ENCODE measurements at regions of chr2 and their contacts with region 1.

Region 1: GRCh38 chr2:241702132-241703031 is 543 bp downstream of the ING5 start:
- DNase-seq: peak; percentile 95
- ATAC-seq: peak; percentile 81
- H3K4me3 Mint-ChIP-seq: peak overlapping the region; percentile 76
- H3K27ac Mint-ChIP-seq: peak overlapping the region; percentile 75
- H3K4me1 Mint-ChIP-seq: peaks cover 35% of the 10 kb centered on the region
- H3K27me3 Mint-ChIP-seq: no peaks in the 10 kb centered on the region
- CTCF ChIP-seq: peak; percentile 80

Region 2: GRCh38 chr2:241686649-241687425 is 15.5 kb before region 1 on chr2 and contains the start of gene DTYMK:
- CTCF ChIA-PET with region 1: interaction called, 8 read pairs
- POLR2A ChIA-PET with region 1: interaction called, 77 read pairs
- intact Hi-C with region 1: no loop called
- DNase-seq: peak; percentile 97
- ATAC-seq: peak; percentile 97
- H3K4me3 Mint-ChIP-seq: peak within 1 kb of the TSS; percentile 97
- H3K27ac Mint-ChIP-seq: peak within 1 kb of the TSS; percentile 97
- H3K4me1 Mint-ChIP-seq: peaks cover 28% of the 10 kb centered on the region
- H3K27me3 Mint-ChIP-seq: no peaks in the 10 kb centered on the region
- CTCF ChIP-seq: no peak
- total RNA-seq, gene DTYMK: 87.1 to 91.9 TPM

Region 3: DNA sequence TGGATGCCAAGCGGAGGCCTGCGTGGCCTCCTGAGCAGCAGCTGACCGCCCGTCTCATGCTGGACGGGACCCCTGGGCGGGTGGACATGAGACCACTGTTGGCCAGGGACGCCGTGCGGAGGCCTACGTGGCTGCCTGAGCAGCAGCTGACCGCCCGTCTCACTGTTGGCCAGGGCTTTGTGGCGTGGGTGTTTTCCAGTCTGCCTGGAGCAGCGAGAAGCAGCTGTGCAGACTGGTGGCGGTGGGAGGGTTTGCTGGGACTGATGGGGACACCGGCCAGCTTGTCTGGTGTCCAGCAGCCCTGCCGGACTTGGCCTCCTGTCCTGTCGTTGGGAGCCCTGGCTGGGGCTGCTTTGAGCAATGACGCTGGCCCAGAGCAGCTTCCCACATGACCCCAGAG is 26.2 kb after region 1 on chr2:
- CTCF ChIA-PET with region 1: interaction called, 16 read pairs
- POLR2A ChIA-PET with region 1: interaction called, 15 read pairs
- intact Hi-C with region 1: no loop called
- DNase-seq: no peak
- ATAC-seq: no peak
- H3K4me3 Mint-ChIP-seq: no peak overlapping the region
- H3K27ac Mint-ChIP-seq: no peak overlapping the region
- H3K4me1 Mint-ChIP-seq: peaks cover 27% of the 10 kb centered on the region
- H3K27me3 Mint-ChIP-seq: no peaks in the 10 kb centered on the region
- CTCF ChIP-seq: no peak

Region 4: DNA sequence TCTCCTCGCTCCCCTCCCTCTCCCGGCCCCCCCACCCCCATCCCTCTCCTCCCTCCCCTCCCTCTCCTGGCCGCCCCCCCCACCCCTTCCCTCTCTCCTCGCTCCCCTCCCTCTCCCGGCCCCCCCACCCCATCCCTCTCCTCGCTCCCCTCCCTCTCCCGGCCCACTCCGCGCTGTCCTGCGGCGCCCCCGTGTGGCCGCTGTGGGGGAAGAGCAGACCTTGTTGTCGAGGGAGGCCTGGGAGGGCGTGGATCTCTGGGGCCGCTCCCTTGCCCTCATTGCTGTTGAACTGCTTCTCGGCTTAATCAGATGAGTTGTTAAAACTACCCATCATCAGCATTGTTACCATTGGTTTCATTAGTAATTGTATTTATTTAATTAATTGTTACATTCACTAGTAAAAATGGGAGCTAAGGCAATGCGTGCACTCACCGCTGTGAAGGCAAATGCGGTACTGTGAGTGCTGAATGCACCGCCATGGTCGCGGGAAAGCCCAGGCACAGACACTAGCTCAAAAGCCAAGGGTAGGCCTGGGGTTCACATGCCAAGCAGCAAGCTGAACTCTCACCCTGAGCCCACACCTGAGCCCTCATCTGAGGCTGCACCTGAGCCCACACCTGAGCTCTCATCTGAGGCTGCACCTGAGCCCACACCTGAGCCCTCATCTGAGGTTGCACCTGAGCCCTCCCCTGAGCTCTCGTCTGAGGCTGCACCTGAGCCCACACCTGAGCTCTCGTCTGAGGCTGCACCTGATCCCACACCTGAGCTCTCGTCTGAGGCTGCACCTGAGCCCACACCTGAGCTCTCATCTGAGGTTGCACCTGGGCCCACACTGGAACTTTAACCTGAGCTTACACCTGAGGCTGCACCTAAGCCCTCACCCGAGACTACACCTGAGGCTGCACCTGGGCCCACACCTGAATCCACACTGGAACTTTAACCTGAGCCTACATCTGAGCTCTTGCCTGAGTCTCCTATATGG is 175.9 kb after region 1 on chr2:
- CTCF ChIA-PET with region 1: interaction called, 19 read pairs
- POLR2A ChIA-PET with region 1: interaction called, 9 read pairs
- intact Hi-C with region 1: no loop called
- DNase-seq: peak; percentile 84
- ATAC-seq: no peak
- H3K4me3 Mint-ChIP-seq: no peak overlapping the region
- H3K27ac Mint-ChIP-seq: no peak overlapping the region
- H3K4me1 Mint-ChIP-seq: peaks cover 33% of the 10 kb centered on the region
- H3K27me3 Mint-ChIP-seq: no peaks in the 10 kb centered on the region
- CTCF ChIP-seq: peak; percentile 55